ENCODE measurements at regions of chr19 and their contacts with region 1.

Region 1: GRCh38 chr19:34838753-34839431 is 65.9 kb upstream of the ZNF599 start:
- DNase-seq: peak in 4 of 9 experiments; percentile 30 to 60 (median 40)
- ATAC-seq: peak; percentile 38
- H3K4me3 ChIP-seq: no peak overlapping the region
- H3K4me3 Mint-ChIP-seq: peak overlapping the region; percentile 75
- H3K27ac ChIP-seq: no peak overlapping the region
- H3K27ac Mint-ChIP-seq: no peak overlapping the region
- H3K4me1 ChIP-seq: peaks cover 11% of the 10 kb centered on the region
- H3K4me1 Mint-ChIP-seq: peaks cover 19% of the 10 kb centered on the region
- H3K27me3 ChIP-seq: no peaks in the 10 kb centered on the region
- H3K27me3 Mint-ChIP-seq: no peaks in the 10 kb centered on the region
- CTCF ChIP-seq: no peak

Region 2: DNA sequence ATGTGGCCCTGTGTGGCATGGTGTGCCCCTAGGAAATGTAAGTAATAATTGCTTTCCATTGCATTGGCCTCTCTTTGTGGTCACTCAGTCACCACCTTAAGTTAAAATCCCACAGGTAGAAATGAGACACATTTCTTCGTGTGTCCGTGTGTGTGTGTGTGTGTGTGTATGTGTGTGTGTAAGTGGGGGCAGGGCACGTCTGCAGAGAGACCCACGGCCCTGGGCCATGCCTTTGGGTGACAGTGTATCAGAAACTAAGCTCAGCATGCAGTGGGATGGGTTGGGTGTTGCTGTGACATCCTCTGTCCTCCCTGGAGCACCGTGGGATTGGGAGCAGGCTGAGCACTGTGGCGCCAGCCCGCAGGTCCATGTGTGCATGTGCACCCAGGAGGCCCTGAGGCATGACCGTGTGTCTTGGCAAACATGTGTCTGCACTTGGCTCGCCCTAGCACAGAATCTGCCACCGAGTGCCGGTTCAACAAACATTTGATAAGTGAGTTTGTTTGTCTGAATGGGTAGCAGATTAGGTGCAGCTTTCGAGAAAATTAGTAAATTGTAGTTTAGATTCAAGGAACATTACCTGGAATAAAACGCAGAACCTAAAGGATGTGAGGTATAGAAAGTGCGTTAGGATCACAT is 265.5 kb before region 1 on chr19:
- CTCF ChIA-PET with region 1: no interaction called
- POLR2A ChIA-PET with region 1: no interaction called
- intact Hi-C with region 1: no loop called
- DNase-seq: no peak
- ATAC-seq: no peak
- H3K4me3 ChIP-seq: no peak overlapping the region
- H3K4me3 Mint-ChIP-seq: no peak overlapping the region
- H3K27ac ChIP-seq: no peak overlapping the region
- H3K27ac Mint-ChIP-seq: no peak overlapping the region
- H3K4me1 ChIP-seq: no peaks in the 10 kb centered on the region
- H3K4me1 Mint-ChIP-seq: peaks cover 2% of the 10 kb centered on the region
- H3K27me3 ChIP-seq: peaks cover 0 to 3% of the 10 kb centered on the region in 2 experiments
- H3K27me3 Mint-ChIP-seq: peaks cover 13% of the 10 kb centered on the region
- CTCF ChIP-seq: no peak

Region 3: DNA sequence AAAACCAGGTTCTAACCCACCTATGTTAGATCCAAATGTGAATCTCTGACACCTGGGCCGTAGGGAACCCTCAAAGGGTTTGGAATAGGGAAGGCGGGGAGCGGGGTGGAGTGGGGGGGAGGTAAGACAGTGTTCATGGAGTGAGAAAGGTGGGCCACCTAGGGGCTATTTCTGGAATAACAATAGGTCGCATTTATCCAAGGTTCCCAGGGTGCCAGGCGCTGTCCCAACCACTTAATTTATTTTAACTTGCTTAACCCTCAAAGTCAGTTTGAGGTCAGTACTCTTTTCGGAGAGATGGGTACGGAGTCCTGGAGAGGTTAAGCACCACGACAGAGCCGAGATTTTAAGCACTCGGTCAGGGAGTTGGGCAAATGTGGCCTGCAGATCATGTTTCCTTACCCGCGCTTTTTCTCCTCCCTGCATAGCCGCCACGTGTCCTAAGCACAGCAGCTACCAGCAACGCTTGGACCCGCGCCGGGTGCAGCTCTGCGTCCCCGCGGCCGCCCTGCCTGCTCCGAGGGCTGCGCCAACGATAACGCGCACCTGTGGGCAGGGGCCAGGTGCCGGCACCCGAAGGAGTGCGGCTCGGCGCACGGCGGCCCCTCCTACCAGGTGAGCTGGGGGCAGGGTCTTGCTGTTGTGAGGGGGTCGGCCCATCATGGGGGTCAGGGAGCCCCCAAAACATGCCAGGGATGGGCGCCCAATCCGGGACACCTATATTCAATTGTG is 251.8 kb after region 1 on chr19:
- CTCF ChIA-PET with region 1: interaction called, 3 read pairs
- POLR2A ChIA-PET with region 1: no interaction called
- intact Hi-C with region 1: loop called in 1 of 2 experiments (anchors 10 kb)
- DNase-seq: peak in 7 of 9 experiments; percentile 4 to 72 (median 43)
- ATAC-seq: peak; percentile 84
- H3K4me3 ChIP-seq: no peak overlapping the region
- H3K4me3 Mint-ChIP-seq: no peak overlapping the region
- H3K27ac ChIP-seq: no peak overlapping the region
- H3K27ac Mint-ChIP-seq: no peak overlapping the region
- H3K4me1 ChIP-seq: peaks cover 16% of the 10 kb centered on the region
- H3K4me1 Mint-ChIP-seq: peaks cover 14% of the 10 kb centered on the region
- H3K27me3 ChIP-seq: peaks cover 0 to 2% of the 10 kb centered on the region in 2 experiments
- H3K27me3 Mint-ChIP-seq: peaks cover 4% of the 10 kb centered on the region
- CTCF ChIP-seq: peak; percentile 65

Measured in CD8-positive, alpha-beta T cell (primary cell).